ENCODE measurements at regions of chr1 and their contacts with region 1.

Region 1: DNA sequence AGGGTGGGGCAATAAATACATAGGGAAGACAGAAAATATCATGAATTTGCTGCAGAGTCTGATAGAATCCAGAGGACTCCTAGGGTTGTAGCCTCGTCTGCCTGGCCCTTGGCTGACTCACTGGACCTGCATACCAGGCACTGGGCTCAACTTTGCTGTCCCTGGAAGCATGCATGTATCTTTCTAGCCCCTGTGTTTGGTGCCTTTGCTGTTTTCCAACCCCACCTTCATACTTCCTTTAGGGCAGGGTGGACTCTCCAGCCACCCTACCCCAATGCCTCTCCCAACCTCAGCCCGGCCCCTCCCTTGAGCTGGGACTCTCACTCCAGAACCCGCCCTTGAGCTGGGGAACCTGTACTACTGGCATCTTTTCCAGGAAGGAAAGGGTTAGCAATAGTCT is 1.2 kb downstream of the RAB25 start:
- DNase-seq: no peak
- H3K4me3 ChIP-seq: no peak overlapping the region
- H3K27ac ChIP-seq: no peak overlapping the region
- H3K4me1 ChIP-seq: peaks cover 0 to 8% of the 10 kb centered on the region in 2 experiments; a peak in 2 of 4 replicates
- H3K27me3 ChIP-seq: no peaks in the 10 kb centered on the region
- CTCF ChIP-seq: no peak
- EP300 ChIP-seq: no peak
- RAD21 ChIP-seq: no peak

Region 2: DNA sequence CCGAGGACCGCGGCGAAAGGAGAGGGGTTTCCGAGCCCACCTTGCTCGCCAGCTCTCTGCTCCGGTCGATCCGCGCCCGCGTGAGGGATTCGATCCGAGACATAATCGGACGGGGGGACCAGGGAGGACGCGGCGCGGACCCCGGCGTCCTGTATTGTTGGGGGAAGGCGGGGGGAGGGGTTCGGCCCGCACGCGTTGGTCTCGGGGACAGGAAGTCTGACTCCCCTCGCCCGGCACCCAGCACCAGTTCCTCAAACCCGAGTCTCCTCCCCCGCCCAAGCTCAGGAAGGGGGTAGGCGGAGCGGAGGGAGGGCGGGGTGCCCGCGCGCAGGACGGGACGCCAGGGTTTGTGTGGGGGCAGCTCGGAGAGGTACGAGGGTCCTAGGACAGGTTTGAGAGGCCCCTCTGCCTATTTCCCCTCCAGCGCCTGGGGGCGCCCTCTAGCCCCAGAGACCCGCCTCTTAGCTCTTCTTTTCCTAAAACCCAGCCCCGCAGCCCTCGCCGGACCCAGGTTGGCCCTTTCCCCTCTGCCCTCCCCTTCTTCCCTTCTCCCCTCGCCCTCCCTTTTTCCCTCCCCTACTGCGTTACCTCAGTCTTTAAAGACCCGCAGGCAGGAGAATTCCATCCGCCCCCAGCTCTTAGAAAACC is 83.7 kb before region 1 on chr1 and contains the start of gene ARHGEF2:
- CTCF ChIA-PET with region 1: interaction called, 10 read pairs
- POLR2A ChIA-PET with region 1: no interaction called
- DNase-seq: peak; percentile 91
- H3K4me3 ChIP-seq: peak within 1 kb of the TSS; percentile 88 to 91
- H3K27ac ChIP-seq: peak within 1 kb of the TSS; percentile 87 to 93
- H3K4me1 ChIP-seq: peaks cover 42 to 57% of the 10 kb centered on the region in 2 experiments
- H3K27me3 ChIP-seq: no peaks in the 10 kb centered on the region
- CTCF ChIP-seq: peak; percentile 52
- EP300 ChIP-seq: no peak
- RAD21 ChIP-seq: 0 out of 2 replicates have a peak, but pooled peaks have one; percentile 7
- polyA plus RNA-seq, gene ARHGEF2: 32.4 and 50.8 TPM in 2 replicates

Region 3: GRCh38 chr1:156025877-156026276 is 36.3 kb before region 1 on chr1:
- CTCF ChIA-PET with region 1: interaction called, 45 read pairs
- POLR2A ChIA-PET with region 1: interaction called, 6 read pairs
- DNase-seq: peak; percentile 85
- H3K4me3 ChIP-seq: peak overlapping the region in 1 of 2 experiments; percentile 33; a peak in 1 of 4 replicates
- H3K27ac ChIP-seq: no peak overlapping the region
- H3K4me1 ChIP-seq: peaks cover 0 to 3% of the 10 kb centered on the region in 2 experiments; a peak in 2 of 4 replicates
- H3K27me3 ChIP-seq: no peaks in the 10 kb centered on the region
- CTCF ChIP-seq: peak; percentile 72
- EP300 ChIP-seq: no peak
- RAD21 ChIP-seq: peak; percentile 65

Region 4: GRCh38 chr1:156075162-156075561 is 13.0 kb after region 1 on chr1:
- CTCF ChIA-PET with region 1: interaction called, 15 read pairs
- POLR2A ChIA-PET with region 1: no interaction called
- DNase-seq: no peak
- H3K4me3 ChIP-seq: no peak overlapping the region
- H3K27ac ChIP-seq: no peak overlapping the region
- H3K4me1 ChIP-seq: peaks cover 0 to 48% of the 10 kb centered on the region in 2 experiments; a peak in 2 of 4 replicates
- H3K27me3 ChIP-seq: no peaks in the 10 kb centered on the region
- CTCF ChIP-seq: no peak
- EP300 ChIP-seq: no peak
- RAD21 ChIP-seq: no peak

Region 5: GRCh38 chr1:156080928-156081728 is 18.9 kb after region 1 on chr1:
- CTCF ChIA-PET with region 1: interaction called, 15 read pairs
- POLR2A ChIA-PET with region 1: no interaction called
- DNase-seq: peak; percentile 67
- H3K4me3 ChIP-seq: peak overlapping the region; percentile 79 to 88
- H3K27ac ChIP-seq: peak overlapping the region; percentile 57 to 87
- H3K4me1 ChIP-seq: peaks cover 14 to 35% of the 10 kb centered on the region in 2 experiments; a peak in 3 of 4 replicates
- H3K27me3 ChIP-seq: no peaks in the 10 kb centered on the region
- CTCF ChIP-seq: no peak
- EP300 ChIP-seq: no peak
- RAD21 ChIP-seq: no peak

Region 6: GRCh38 chr1:156104065-156104810 is 42.0 kb after region 1 on chr1:
- CTCF ChIA-PET with region 1: no interaction called
- POLR2A ChIA-PET with region 1: no interaction called
- DNase-seq: peak; percentile 81
- H3K4me3 ChIP-seq: no peak overlapping the region
- H3K27ac ChIP-seq: peak overlapping the region; percentile 77 to 99
- H3K4me1 ChIP-seq: peaks cover 58 to 63% of the 10 kb centered on the region in 2 experiments
- H3K27me3 ChIP-seq: no peaks in the 10 kb centered on the region
- CTCF ChIP-seq: no peak
- EP300 ChIP-seq: no peak
- RAD21 ChIP-seq: no peak

Measured in SK-N-SH (cell line).